ENCODE measurements at regions of chr10 and their contacts with region 1.

Region 1: DNA sequence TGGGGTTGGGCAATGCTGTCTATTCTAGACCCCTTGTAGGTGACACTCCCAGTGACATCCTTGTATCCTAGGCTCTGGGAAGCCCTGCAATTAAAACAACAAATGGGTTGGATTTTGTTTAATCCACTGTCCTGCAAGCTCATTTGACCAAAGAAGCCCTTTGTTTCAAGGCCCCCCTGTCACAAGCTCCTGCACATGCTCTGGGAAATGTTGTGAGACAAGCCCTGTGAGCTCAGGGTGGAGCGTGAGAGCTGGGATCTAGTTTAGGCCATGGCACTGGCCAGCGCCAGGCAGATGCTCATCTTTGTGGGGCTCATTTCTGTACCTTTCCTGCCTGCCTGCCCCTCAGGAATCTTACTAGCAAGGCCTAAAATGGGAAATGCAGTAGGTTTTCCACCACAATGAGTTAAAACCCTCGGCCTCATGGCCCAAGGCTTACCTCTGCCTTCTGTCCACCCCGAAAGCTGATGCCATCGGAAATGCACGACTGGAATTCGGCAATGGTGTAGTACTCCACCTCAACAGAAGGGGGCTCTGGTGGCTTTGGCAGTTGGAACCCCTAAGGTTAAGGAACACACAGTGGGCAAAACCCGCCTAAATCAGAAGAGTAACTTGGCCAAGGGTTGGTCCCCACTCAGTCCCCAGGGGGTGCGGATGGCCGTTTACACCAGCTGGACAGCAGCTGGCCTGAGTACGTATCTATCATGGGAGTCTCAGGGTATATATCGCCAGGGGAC is 112.0 kb downstream of the NEURL1 start:
- DNase-seq: no peak
- H3K4me3 ChIP-seq: no peak overlapping the region
- H3K27me3 ChIP-seq: no peaks in the 10 kb centered on the region
- CTCF ChIP-seq: peak; percentile 90

Region 2: DNA sequence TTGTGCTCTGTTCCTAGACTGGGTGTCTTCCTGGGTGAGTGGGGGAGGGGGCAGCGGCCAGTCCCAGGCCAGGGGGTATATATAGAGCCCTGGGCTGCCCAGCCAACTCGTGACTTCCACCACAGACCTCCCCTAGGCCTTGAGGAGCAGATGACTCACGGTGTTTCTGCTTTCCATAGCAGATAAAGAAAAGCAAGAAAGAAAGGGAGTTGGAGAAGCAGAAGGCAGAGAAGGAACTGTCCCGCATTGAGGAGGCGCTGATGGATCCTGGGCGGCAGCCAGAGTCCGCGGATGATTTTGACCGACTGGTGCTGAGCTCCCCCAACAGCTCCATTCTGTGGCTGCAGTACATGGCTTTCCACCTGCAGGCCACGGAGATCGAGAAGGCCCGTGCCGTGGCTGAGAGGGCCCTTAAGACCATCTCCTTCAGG is 163.5 kb before region 1 on chr10:
- CTCF ChIA-PET with region 1: no interaction called
- POLR2A ChIA-PET with region 1: no interaction called
- DNase-seq: no peak
- H3K4me3 ChIP-seq: no peak overlapping the region
- H3K27me3 ChIP-seq: no peaks in the 10 kb centered on the region
- CTCF ChIP-seq: no peak

Region 3: GRCh38 chr10:103616705-103617601 is 11.4 kb after region 1 on chr10:
- CTCF ChIA-PET with region 1: interaction called, 30 read pairs
- POLR2A ChIA-PET with region 1: no interaction called
- DNase-seq: peak; percentile 86
- H3K4me3 ChIP-seq: no peak overlapping the region
- H3K27me3 ChIP-seq: no peaks in the 10 kb centered on the region
- CTCF ChIP-seq: no peak

Region 4: DNA sequence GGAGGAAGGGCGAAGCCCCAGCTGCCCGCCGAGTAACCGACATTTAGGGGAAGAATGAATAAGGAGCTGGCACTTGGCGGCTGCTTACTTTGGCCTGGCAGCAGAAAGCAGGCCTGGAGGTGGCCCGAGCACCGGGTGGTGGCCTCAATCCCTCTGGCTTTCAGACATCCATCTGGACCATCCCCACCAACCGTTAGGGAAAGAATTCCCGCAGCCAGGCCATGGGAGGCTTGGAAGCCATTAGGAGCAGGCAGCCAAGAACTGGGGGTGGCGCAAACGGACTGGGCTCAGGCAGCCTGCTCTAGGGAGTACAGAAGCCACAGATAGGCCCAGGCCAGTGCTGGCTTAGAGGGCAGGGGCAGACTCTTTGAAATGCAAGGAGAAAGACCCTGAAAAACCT is 20.7 kb after region 1 on chr10:
- CTCF ChIA-PET with region 1: no interaction called
- POLR2A ChIA-PET with region 1: interaction called, 10 read pairs
- DNase-seq: no peak
- H3K4me3 ChIP-seq: no peak overlapping the region
- H3K27me3 ChIP-seq: no peaks in the 10 kb centered on the region
- CTCF ChIP-seq: no peak

Region 5: GRCh38 chr10:103659674-103660363 is 54.3 kb after region 1 on chr10:
- CTCF ChIA-PET with region 1: interaction called, 22 read pairs
- POLR2A ChIA-PET with region 1: no interaction called
- DNase-seq: peak; percentile 61
- H3K4me3 ChIP-seq: peak overlapping the region; percentile 81
- H3K27me3 ChIP-seq: no peaks in the 10 kb centered on the region
- CTCF ChIP-seq: peak; percentile 35

Region 6: DNA sequence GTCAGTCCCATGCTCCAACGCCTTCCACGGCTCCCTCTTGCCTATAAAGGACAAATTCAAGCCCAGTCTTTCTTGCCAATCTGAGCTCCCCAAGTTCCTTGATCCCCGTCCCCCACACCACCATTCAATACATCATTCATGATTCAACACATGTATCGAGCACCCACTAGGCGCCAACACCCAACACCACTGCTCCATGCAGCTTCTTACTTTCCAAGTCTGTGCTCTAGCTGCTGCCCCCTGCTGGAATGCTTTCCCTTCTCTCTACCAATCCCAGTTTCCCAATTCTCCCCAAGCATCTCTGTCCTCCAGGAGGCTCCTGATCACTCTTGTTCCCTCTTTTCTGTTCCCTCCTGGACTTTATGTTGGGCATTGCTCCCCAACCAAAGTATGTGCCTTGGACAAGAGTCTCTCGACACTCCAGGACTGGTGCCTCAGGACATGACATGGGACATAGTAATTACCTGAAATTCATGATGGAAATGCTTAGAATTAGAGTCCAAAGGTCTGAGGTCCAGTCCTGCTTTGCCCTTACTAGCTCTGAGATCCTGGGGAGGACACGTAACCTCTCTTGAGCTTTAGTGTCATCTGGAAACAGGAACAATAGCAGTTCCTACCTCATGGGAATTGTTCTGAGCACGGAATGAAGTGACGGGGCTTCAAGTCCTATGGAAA is 60.7 kb after region 1 on chr10:
- CTCF ChIA-PET with region 1: interaction called, 22 read pairs
- POLR2A ChIA-PET with region 1: no interaction called
- DNase-seq: no peak
- H3K4me3 ChIP-seq: no peak overlapping the region
- H3K27me3 ChIP-seq: no peaks in the 10 kb centered on the region
- CTCF ChIP-seq: peak; percentile 54

Region 7: DNA sequence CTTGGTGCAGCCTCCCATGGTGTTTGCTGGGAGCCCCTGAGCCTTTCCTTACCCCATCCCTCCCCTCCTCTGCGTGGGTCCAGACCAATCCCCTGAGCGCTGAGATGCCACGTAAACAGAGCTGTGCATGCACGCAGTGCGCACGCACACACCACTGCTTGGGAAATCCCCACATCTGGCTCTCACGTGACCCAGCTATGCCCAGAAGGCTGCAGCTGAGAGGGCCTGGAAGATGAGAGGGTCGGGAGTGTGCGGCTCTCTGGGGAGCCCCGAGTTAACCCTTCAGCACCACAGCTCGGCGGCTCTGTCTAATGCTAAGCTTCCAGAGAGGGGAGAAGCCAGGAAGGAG is 72.6 kb after region 1 on chr10:
- CTCF ChIA-PET with region 1: interaction called, 98 read pairs
- POLR2A ChIA-PET with region 1: no interaction called
- DNase-seq: peak; percentile 93
- H3K4me3 ChIP-seq: peak overlapping the region; percentile 52
- H3K27me3 ChIP-seq: no peaks in the 10 kb centered on the region
- CTCF ChIP-seq: no peak

Region 8: GRCh38 chr10:103696411-103697145 is 91.1 kb after region 1 on chr10:
- CTCF ChIA-PET with region 1: interaction called, 98 read pairs
- POLR2A ChIA-PET with region 1: no interaction called
- DNase-seq: peak; percentile 77
- H3K4me3 ChIP-seq: no peak overlapping the region
- H3K27me3 ChIP-seq: no peaks in the 10 kb centered on the region
- CTCF ChIP-seq: peak; percentile 71

Region 9: GRCh38 chr10:103772096-103772845 is 166.7 kb after region 1 on chr10:
- CTCF ChIA-PET with region 1: no interaction called
- POLR2A ChIA-PET with region 1: no interaction called
- DNase-seq: peak; percentile 92
- H3K4me3 ChIP-seq: peak overlapping the region; percentile 26
- H3K27me3 ChIP-seq: no peaks in the 10 kb centered on the region
- CTCF ChIP-seq: no peak

Measured in BJ (cell line).